ENCODE measurements at regions of chrX and their contacts with region 1.

Region 1: GRCh38 chrX:25020905-25021449 is 5.2 kb upstream of the ARX start:
- DNase-seq: peak; percentile 80
- H3K4me3 Mint-ChIP-seq: peak overlapping the region; percentile 59
- H3K27ac Mint-ChIP-seq: no peak overlapping the region
- H3K4me1 Mint-ChIP-seq: peaks cover 15% of the 10 kb centered on the region
- H3K27me3 Mint-ChIP-seq: peaks cover 73% of the 10 kb centered on the region

Region 2: DNA sequence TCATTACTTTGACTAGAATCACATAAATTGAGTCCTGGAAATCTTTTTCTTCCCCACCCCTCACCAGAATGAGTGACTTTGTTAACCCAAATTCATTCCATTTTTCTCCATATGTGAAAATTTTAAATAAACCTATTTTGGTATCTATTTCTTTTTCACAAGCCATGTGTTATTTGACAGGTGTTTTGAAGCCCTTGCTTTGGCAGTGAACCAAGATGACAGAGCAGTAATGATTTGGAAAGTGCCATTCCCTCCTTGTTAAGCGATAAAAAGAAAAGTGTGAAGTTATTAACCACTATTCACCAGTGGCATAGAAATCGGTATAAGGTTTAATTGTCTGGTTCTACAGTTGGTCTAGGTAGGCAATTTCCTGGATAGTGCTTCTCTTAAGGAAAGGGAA is 261.2 kb before region 1 on chrX:
- intact Hi-C with region 1: loop called (anchors 10 kb)
- DNase-seq: no peak
- H3K4me3 Mint-ChIP-seq: no peak overlapping the region
- H3K27ac Mint-ChIP-seq: no peak overlapping the region
- H3K4me1 Mint-ChIP-seq: peaks cover 2% of the 10 kb centered on the region
- H3K27me3 Mint-ChIP-seq: no peaks in the 10 kb centered on the region

Region 3: GRCh38 chrX:25007059-25008053 is 13.6 kb before region 1 on chrX:
- intact Hi-C with region 1: loop called (anchors 2 kb)
- DNase-seq: no peak
- H3K4me3 Mint-ChIP-seq: peak overlapping the region; percentile 32
- H3K27ac Mint-ChIP-seq: no peak overlapping the region
- H3K4me1 Mint-ChIP-seq: peaks cover 13% of the 10 kb centered on the region
- H3K27me3 Mint-ChIP-seq: peaks cover 63% of the 10 kb centered on the region

Region 4: GRCh38 chrX:25144043-25144940 is 123.3 kb after region 1 on chrX:
- intact Hi-C with region 1: loop called (anchors 5 kb)
- DNase-seq: peak; percentile 72
- H3K4me3 Mint-ChIP-seq: no peak overlapping the region
- H3K27ac Mint-ChIP-seq: no peak overlapping the region
- H3K4me1 Mint-ChIP-seq: peaks cover 2% of the 10 kb centered on the region
- H3K27me3 Mint-ChIP-seq: peaks cover 28% of the 10 kb centered on the region

Measured in activated CD4-positive, alpha-beta T cell treated with anti-CD3 and anti-CD28 coated beads, Interleukin-2, amount 10 ng/mL, durations not matched to agents 24 days and 14 days (primary cell).